ENCODE measurements at regions of chr6 and their contacts with region 1.

Region 1: DNA sequence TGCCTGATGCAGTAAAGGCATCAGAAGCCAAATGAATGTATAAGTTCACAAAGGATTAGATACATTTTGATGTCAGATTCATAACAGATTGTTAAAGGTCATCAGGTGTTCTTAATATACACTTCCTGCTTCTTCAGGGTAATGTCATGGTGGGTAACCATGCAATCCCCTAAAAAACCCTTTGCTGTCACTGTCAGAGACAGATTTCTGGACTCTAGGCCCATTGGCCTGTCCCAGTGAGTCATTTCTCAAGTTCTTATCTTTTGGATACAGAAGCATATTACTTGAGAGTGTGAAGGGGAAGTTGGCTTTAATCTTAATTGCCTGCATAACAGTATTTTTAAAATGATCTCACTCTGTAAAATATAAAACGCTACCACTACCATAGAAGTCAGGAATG is 895.6 kb upstream of the MAP3K7 start:
- DNase-seq: peak; percentile 94
- H3K4me3 ChIP-seq: no peak overlapping the region
- H3K27ac ChIP-seq: peak overlapping the region; percentile 72
- H3K4me1 ChIP-seq: peaks cover 45% of the 10 kb centered on the region
- H3K27me3 ChIP-seq: no peaks in the 10 kb centered on the region
- CTCF ChIP-seq: no peak
- POLR2A ChIP-seq: no peak

Region 2: GRCh38 chr6:90197854-90198496 is 1284.5 kb before region 1 on chr6:
- CTCF ChIA-PET with region 1: no interaction called
- POLR2A ChIA-PET with region 1: no interaction called
- dilution Hi-C with region 1: no loop called
- intact Hi-C with region 1: no loop called
- DNase-seq: no peak
- H3K4me3 ChIP-seq: no peak overlapping the region
- H3K27ac ChIP-seq: no peak overlapping the region
- H3K4me1 ChIP-seq: peaks cover 5% of the 10 kb centered on the region
- H3K27me3 ChIP-seq: no peaks in the 10 kb centered on the region
- CTCF ChIP-seq: no peak
- POLR2A ChIP-seq: no peak

Region 3: GRCh38 chr6:91081452-91082067 is 400.9 kb before region 1 on chr6:
- CTCF ChIA-PET with region 1: interaction called, 19 read pairs
- POLR2A ChIA-PET with region 1: no interaction called
- dilution Hi-C with region 1: no loop called
- intact Hi-C with region 1: no loop called
- DNase-seq: peak; percentile 52
- H3K4me3 ChIP-seq: no peak overlapping the region
- H3K27ac ChIP-seq: no peak overlapping the region
- H3K4me1 ChIP-seq: no peaks in the 10 kb centered on the region
- H3K27me3 ChIP-seq: no peaks in the 10 kb centered on the region
- CTCF ChIP-seq: peak; percentile 39 to 47
- POLR2A ChIP-seq: no peak

Region 4: GRCh38 chr6:91161246-91161645 is 321.3 kb before region 1 on chr6:
- CTCF ChIA-PET with region 1: no interaction called
- POLR2A ChIA-PET with region 1: no interaction called
- dilution Hi-C with region 1: no loop called
- intact Hi-C with region 1: no loop called
- DNase-seq: no peak
- H3K4me3 ChIP-seq: no peak overlapping the region
- H3K27ac ChIP-seq: no peak overlapping the region
- H3K4me1 ChIP-seq: no peaks in the 10 kb centered on the region
- H3K27me3 ChIP-seq: no peaks in the 10 kb centered on the region
- CTCF ChIP-seq: no peak
- POLR2A ChIP-seq: no peak

Region 5: DNA sequence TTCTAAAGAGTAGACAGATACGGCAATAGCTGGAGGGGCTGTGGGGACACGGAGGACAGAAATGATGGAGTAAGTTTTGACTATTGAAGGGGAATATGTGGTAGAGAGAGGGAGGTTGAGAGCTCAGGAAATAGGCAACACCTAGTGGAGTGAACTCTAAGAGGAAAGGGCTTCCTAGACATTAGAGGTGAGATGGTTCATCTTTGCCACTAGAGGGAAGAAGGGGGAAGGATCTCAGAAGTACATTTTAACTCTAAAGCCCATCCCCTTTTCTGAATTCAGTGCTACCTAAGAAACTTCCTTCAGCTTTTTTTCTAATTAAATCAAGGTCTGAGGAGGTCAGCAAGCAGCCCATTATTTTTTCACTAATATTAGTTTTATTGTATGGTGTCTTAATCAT is 206.2 kb before region 1 on chr6:
- CTCF ChIA-PET with region 1: interaction called, 13 read pairs
- POLR2A ChIA-PET with region 1: no interaction called
- dilution Hi-C with region 1: no loop called
- intact Hi-C with region 1: no loop called
- DNase-seq: no peak
- H3K4me3 ChIP-seq: no peak overlapping the region
- H3K27ac ChIP-seq: no peak overlapping the region
- H3K4me1 ChIP-seq: no peaks in the 10 kb centered on the region
- H3K27me3 ChIP-seq: no peaks in the 10 kb centered on the region
- CTCF ChIP-seq: peak in 1 of 2 donors; percentile 10
- POLR2A ChIP-seq: no peak

Region 6: GRCh38 chr6:91299544-91300491 is 182.7 kb before region 1 on chr6:
- CTCF ChIA-PET with region 1: no interaction called
- POLR2A ChIA-PET with region 1: no interaction called
- dilution Hi-C with region 1: no loop called
- intact Hi-C with region 1: no loop called
- DNase-seq: no peak
- H3K4me3 ChIP-seq: no peak overlapping the region
- H3K27ac ChIP-seq: no peak overlapping the region
- H3K4me1 ChIP-seq: no peaks in the 10 kb centered on the region
- H3K27me3 ChIP-seq: no peaks in the 10 kb centered on the region
- CTCF ChIP-seq: no peak
- POLR2A ChIP-seq: no peak

Region 7: DNA sequence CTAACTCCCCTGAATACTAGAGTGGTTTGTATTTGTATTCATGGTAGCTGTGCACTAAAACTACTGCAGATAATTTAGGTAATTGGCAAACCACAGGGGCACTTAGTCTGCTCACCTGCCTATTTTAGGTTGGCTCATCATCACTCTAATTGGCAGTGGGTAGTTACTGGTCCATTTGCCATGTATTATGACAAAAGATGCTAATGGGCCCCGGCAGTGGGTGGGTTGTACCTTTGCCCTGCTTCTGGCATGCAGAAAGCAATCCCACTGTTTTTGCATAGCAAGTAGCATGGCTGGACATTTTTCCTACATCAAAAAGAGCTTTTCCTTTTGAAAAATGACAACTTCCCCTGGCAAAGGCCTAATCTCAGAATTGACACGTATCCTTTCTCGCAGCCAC is 154.3 kb before region 1 on chr6:
- CTCF ChIA-PET with region 1: interaction called, 65 read pairs
- POLR2A ChIA-PET with region 1: no interaction called
- dilution Hi-C with region 1: no loop called
- intact Hi-C with region 1: no loop called
- DNase-seq: no peak
- H3K4me3 ChIP-seq: no peak overlapping the region
- H3K27ac ChIP-seq: no peak overlapping the region
- H3K4me1 ChIP-seq: no peaks in the 10 kb centered on the region
- H3K27me3 ChIP-seq: no peaks in the 10 kb centered on the region
- CTCF ChIP-seq: no peak
- POLR2A ChIP-seq: no peak

Region 8: DNA sequence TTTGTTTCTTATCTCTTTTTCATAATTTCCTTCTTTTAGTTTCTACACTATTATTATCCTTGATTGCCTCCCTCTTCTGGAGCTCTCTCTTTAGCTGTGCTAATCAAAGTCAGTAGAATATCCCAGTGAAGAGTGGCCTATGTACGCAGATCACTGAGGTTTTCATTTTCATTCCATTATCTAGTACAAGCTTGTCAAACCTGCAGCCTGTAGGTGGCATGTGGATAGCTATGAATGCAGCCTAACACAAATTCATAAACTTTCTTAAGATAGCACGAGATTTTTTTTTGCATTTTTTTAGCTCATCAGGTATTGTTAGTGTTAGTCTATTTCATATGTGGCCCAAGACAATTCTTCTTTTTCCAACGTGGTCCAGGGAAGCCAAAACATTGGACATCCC is 70.0 kb before region 1 on chr6:
- CTCF ChIA-PET with region 1: interaction called, 17 read pairs
- POLR2A ChIA-PET with region 1: no interaction called
- dilution Hi-C with region 1: no loop called
- intact Hi-C with region 1: no loop called
- DNase-seq: peak; percentile 8
- H3K4me3 ChIP-seq: no peak overlapping the region
- H3K27ac ChIP-seq: no peak overlapping the region
- H3K4me1 ChIP-seq: no peaks in the 10 kb centered on the region
- H3K27me3 ChIP-seq: no peaks in the 10 kb centered on the region
- CTCF ChIP-seq: no peak
- POLR2A ChIP-seq: no peak

Region 9: DNA sequence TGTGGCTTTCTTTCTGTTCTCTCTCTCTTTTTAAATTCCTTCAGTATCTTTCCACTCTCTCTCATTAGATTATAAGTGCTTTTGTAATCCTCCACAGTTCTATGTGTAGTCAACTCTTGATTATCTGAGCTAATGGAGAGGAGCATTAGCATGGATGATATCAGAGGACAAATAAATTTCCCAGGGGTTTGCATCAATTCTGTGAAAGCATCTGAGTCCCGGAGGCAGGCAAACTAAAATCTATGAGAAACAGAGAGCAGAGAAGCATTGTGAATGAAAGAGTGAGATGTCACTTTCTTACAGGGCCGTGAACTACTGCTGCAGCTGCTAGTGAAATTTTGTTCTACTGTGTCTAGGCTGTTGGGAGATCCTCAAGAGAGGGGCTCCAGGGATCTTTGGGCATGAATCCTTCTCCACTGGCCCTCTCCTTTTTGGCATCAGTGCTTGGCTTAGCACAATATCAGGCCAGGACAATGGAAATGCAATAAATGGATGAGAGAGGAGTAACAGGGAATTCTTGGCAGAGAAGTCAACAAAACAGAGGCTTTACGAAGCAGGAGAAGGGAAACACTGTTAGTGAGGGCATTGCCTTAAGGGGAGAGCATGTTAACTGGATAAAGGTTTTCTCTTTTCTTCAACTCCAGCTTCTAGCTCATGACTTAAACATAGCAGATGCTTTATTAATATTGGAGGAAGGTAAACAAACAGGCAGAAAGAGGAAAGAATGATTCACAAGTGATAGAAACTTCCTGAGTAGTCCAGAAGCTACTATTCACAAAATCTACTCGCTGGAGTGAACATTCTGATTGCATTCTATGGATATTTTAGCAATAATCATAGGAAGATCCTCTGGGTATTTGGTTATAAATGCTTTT is 48.6 kb before region 1 on chr6:
- CTCF ChIA-PET with region 1: interaction called, 8 read pairs
- POLR2A ChIA-PET with region 1: no interaction called
- dilution Hi-C with region 1: no loop called
- intact Hi-C with region 1: loop called (anchors 2 kb)
- DNase-seq: peak; percentile 78
- H3K4me3 ChIP-seq: no peak overlapping the region
- H3K27ac ChIP-seq: peak overlapping the region; percentile 42
- H3K4me1 ChIP-seq: peaks cover 35% of the 10 kb centered on the region
- H3K27me3 ChIP-seq: no peaks in the 10 kb centered on the region
- CTCF ChIP-seq: no peak
- POLR2A ChIP-seq: no peak

Region 10: GRCh38 chr6:92159046-92159445 is 676.5 kb after region 1 on chr6:
- CTCF ChIA-PET with region 1: no interaction called
- POLR2A ChIA-PET with region 1: no interaction called
- dilution Hi-C with region 1: no loop called
- intact Hi-C with region 1: no loop called
- DNase-seq: no peak
- H3K4me3 ChIP-seq: no peak overlapping the region
- H3K27ac ChIP-seq: no peak overlapping the region
- H3K4me1 ChIP-seq: no peaks in the 10 kb centered on the region
- H3K27me3 ChIP-seq: no peaks in the 10 kb centered on the region
- CTCF ChIP-seq: no peak
- POLR2A ChIP-seq: no peak

Region 11: GRCh38 chr6:92541457-92542060 is 1059.1 kb after region 1 on chr6:
- CTCF ChIA-PET with region 1: no interaction called
- POLR2A ChIA-PET with region 1: no interaction called
- dilution Hi-C with region 1: no loop called
- intact Hi-C with region 1: loop called (anchors 10 kb)
- DNase-seq: no peak
- H3K4me3 ChIP-seq: no peak overlapping the region
- H3K27ac ChIP-seq: no peak overlapping the region
- H3K4me1 ChIP-seq: peaks cover 49% of the 10 kb centered on the region
- H3K27me3 ChIP-seq: no peaks in the 10 kb centered on the region
- CTCF ChIP-seq: no peak
- POLR2A ChIP-seq: no peak

Measured in endothelial cell of umbilical vein (primary cell).